ENCODE measurements at regions of chr21 and their contacts with region 1.

Region 1: DNA sequence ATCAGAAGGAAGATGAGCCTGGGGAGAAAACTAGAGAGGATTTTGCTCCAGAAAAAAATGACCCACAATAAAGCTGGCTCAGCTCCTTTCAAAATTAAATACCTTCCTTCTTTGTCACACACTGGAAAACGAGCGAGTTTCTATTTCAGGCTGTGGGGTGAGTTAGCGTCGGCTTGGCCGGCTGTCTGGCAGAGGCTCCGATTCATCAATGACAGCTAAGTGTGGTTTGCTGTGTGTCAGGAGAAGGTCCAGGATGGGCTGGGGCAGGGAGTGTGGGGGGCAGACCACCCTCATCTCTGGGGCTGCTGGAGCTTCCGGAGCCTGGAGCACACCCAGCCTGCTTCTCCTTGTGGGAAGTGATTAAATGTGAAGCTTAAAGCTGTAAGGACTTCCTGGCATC is 120.2 kb downstream of the ETS2 start:
- DNase-seq: no peak
- H3K4me3 ChIP-seq: peak overlapping the region in 1 of 2 donors; percentile 18
- H3K27ac ChIP-seq: peak overlapping the region; percentile 80
- H3K4me1 ChIP-seq: peaks cover 46% of the 10 kb centered on the region
- H3K27me3 ChIP-seq: no peaks in the 10 kb centered on the region
- CTCF ChIP-seq: no peak
- POLR2A ChIP-seq: no peak

Region 2: GRCh38 chr21:38985568-38986378 is 59.9 kb after region 1 on chr21:
- intact Hi-C with region 1: loop called (anchors 10 kb)
- DNase-seq: peak in 1 of 2 donors; percentile 94
- H3K4me3 ChIP-seq: no peak overlapping the region
- H3K27ac ChIP-seq: peak overlapping the region; percentile 58
- H3K4me1 ChIP-seq: peaks cover 66% of the 10 kb centered on the region
- H3K27me3 ChIP-seq: no peaks in the 10 kb centered on the region
- CTCF ChIP-seq: no peak
- POLR2A ChIP-seq: no peak